ENCODE measurements at regions of chr15 and their contacts with region 1.

Region 1: DNA sequence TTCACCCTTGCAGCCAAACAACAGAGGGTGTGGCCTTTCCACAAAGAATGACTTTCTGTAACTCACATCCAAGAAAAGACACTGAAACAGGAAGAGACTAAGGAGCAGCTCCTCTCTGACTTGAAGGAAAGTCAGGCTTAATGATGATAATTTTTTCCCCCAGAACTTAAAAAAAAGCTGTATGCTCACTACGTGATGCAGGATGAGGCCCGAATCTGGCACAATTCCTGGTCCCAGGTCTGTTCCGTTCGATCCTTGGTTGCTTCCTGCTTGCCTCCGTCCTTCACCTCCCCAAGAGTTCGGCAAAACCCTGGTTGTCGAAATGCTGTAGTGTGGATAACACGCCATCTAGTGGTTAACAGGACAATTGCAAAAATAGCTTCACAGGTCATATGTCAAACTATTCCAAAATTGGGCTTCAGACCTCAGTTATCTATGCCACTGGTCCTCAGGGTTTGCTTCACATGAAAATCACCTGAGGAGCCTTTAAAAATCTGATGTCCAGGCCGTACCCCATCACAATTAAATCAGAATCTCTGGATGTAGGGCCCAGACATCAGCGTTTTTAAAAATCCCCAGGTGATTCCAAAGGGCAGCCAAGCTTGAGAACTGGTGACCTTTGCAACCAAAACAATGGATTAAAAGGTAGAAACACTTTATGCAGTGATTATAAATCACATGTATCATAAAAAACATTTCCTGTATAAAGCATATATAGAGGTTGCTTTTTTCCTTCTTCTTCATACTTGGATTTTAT is 28.1 kb upstream of the SYNM start:
- DNase-seq: peak; percentile 89
- H3K4me3 ChIP-seq: peak overlapping the region; percentile 70
- H3K27ac ChIP-seq: peak overlapping the region; percentile 31
- H3K4me1 ChIP-seq: 0 out of 2 replicates have a peak, but pooled peaks cover 4% of the 10 kb centered on the region
- H3K27me3 ChIP-seq: no peaks in the 10 kb centered on the region

Region 2: DNA sequence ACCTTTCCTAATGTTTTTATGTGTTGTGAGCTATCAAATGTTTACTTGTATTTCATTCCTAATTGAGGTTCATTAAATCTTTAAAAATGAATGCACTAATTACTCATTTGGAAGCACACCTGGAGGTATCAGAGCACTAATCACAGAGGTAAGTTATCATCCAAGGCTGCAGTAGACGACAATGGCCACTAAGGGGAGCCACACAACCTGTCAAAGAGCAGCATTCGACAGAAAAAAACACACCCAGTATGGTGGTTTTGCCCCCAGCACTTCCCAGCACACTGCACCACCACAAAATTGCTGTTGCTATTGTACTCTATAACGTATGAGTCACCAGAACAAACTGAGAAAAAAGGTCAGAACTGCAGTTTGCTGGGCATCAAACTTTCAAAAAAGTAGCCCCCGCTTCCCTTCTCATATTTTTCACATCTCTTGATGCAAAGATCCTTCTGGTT is 634.3 kb before region 1 on chr15:
- in situ Hi-C with region 1: loop called (anchors 10 kb)
- DNase-seq: peak; percentile 89
- H3K4me3 ChIP-seq: no peak overlapping the region
- H3K27ac ChIP-seq: no peak overlapping the region
- H3K4me1 ChIP-seq: 0 out of 2 replicates have a peak, but pooled peaks cover 3% of the 10 kb centered on the region
- H3K27me3 ChIP-seq: peaks cover 20% of the 10 kb centered on the region

Region 3: DNA sequence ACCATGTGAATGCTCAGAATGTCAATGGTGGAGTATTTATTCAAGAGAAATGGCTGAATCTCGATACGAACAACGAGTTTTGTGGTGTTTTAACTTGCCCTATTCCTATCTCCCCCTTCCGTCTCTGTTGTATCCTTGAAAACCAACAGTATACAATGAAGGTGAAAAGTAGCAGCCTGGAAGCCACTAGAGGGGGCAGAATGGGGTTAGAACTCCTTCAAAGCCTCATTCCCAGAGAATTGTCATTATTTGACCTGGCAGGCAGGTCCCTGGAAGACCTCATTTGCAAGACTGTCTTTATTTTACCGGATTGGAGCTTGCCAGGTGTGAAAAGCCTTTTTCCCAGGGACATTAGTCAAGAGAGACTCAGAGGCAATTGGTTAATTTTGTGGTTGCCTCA is 313.9 kb after region 1 on chr15:
- in situ Hi-C with region 1: no loop called
- DNase-seq: no peak
- H3K4me3 ChIP-seq: no peak overlapping the region
- H3K27ac ChIP-seq: no peak overlapping the region
- H3K4me1 ChIP-seq: peaks cover 8% of the 10 kb centered on the region
- H3K27me3 ChIP-seq: no peaks in the 10 kb centered on the region